ENCODE measurements at regions of chr17 and their contacts with region 1.

Region 1: GRCh38 chr17:64315032-64315490 is 52.0 kb upstream of the TEX2 start:
- DNase-seq: peak; percentile 91 to 97 (median 94)
- H3K4me3 ChIP-seq: no peak overlapping the region
- H3K27ac ChIP-seq: peak overlapping the region; percentile 28 to 73
- H3K4me1 ChIP-seq: peaks cover 7% of the 10 kb centered on the region
- H3K27me3 ChIP-seq: no peaks in the 10 kb centered on the region
- CTCF ChIP-seq: no peak
- EP300 ChIP-seq: peak; percentile 87
- POLR2A ChIP-seq: no peak

Region 2: DNA sequence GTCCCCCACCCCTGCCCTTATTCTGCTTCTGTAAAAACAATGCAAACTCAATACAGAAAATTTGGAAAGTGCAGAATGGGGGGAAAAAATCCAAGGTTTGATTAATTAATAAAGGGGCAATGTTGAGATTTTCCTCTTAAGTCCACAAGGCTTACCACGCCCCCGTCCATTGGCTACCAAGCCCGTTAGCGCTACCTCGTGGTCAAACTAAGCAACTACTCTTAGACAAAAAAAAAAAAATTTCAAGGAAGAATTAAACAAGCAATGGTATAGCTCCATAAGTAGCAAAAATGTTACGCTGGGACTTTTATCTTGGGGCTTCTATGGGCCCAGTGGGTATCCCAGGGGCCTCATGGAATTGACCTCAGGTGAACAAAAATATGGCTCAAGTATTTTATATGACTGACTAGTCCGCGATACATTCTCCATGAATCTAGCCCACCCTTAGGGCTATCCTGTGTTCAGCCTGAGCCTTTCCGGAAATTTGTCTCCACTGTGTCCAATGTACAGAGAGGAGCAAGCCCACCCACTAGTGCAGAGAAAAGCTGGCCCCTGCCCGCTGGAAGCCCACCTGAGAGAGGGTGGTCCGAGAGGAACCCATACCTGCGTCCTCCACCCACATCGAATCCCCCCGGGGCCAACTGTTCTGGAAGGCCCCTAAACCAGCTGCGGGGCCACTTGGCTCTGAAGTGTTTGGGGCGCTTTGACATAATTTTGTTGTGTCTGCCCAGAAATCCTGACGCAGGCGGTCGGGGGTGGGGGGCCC is 32.9 kb before region 1 on chr17:
- intact Hi-C with region 1: no loop called
- DNase-seq: peak; percentile 49 to 66 (median 57)
- H3K4me3 ChIP-seq: no peak overlapping the region
- H3K27ac ChIP-seq: no peak overlapping the region
- H3K4me1 ChIP-seq: peaks cover 2% of the 10 kb centered on the region
- H3K27me3 ChIP-seq: no peaks in the 10 kb centered on the region
- CTCF ChIP-seq: peak; percentile 59 to 64 (median 59)
- EP300 ChIP-seq: no peak
- POLR2A ChIP-seq: no peak

Region 3: DNA sequence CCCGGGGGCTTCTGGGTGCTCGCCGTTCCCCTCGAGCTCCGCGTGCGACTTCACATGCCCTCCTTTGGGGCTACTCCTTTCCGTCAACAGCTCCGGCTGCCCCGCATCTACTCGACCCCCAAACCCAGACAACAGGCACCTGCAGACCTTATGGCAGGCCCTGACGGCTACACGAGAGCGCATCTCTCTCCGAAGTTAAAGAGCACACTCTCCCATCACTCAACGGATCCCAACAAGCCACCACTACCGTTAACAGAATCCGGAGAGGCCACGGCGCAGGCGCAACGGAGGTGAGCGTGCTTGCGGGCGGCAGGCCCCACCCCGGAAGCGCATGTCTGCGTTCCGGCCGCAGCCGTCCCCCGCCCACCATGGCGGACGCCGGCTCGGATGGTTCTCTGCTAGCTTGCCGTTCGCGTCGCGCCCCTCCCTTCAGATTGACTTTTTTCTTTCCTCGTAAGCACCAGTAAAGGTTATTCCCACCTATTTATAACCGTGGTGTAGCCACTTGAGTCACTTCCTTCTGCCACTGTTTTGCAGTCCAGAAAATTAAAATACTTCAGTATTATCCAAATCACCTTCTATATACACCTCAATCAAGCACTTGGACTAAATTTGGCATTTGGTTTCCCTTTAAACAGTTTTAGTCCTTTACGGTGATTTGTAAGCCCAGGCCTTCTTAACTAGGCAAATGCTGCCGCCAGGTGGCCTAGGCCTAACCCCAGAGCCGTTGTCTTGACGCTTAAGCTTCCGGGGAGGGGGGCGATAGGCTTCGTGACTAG is 181.9 kb after region 1 on chr17 and contains the start of gene POLG2:
- intact Hi-C with region 1: loop called in 1 of 4 experiments (anchors 10 kb)
- DNase-seq: peak; percentile 88 to 94 (median 89)
- H3K4me3 ChIP-seq: peak within 1 kb of the TSS; percentile 52
- H3K27ac ChIP-seq: peak within 1 kb of the TSS; percentile 17 to 64
- H3K4me1 ChIP-seq: peaks cover 6% of the 10 kb centered on the region
- H3K27me3 ChIP-seq: no peaks in the 10 kb centered on the region
- CTCF ChIP-seq: peak in 2 of 3 donors; percentile 46 to 52
- EP300 ChIP-seq: no peak
- POLR2A ChIP-seq: peak; percentile 6
- total RNA-seq, gene POLG2: 13.6 to 21.3 (median 17.6) TPM

Measured in ovary (tissue), 10 donors.